ENCODE measurements at regions of chr1 and their contacts with region 1.

Region 1: DNA sequence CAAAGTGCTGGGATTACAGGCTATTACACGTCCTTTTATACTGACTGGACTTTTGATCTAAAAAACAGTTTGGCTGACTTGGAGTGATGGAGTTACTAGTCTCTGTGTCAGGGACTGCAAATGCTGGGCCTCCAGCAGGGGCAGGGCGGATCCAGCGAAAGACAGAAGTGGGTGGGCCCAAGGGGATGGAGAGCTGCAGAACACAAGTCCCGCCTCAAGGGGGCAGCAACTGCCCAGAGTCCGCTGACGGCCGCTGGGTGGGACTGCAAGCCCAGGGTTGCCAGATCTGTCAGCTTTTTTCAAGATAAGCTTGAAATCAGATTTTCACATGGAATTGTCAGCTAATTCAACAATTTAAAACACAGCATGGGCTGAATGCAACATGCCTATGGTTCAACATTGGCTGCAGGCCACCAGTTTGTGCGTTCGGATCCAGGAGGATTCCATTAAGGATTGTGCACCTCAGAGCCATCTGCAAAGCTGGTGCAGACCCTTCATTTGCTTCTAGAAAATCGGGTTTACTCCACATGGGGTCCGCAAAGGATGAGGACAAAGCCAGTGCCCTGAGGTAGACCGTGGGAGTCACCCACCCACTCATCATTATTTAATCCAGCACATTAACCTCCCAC is 10.7 kb downstream of the STMN1 start:
- DNase-seq: peak; percentile 86 to 96 (median 93)
- ATAC-seq: peak; percentile 100
- H3K4me3 ChIP-seq: no peak overlapping the region
- H3K4me3 Mint-ChIP-seq: peak overlapping the region in 1 of 10 donors; percentile 6
- H3K27ac ChIP-seq: no peak overlapping the region
- H3K27ac Mint-ChIP-seq: peak overlapping the region in 8 of 9 donors; percentile 8 to 76 (median 40)
- H3K4me1 ChIP-seq: peaks cover 0 to 9% of the 10 kb centered on the region in 2 donors
- H3K4me1 Mint-ChIP-seq: peaks cover 7 to 31% (median 11%) of the 10 kb centered on the region in 7 donors
- H3K27me3 ChIP-seq: no peaks in the 10 kb centered on the region
- H3K27me3 Mint-ChIP-seq: no peaks in the 10 kb centered on the region

Region 2: GRCh38 chr1:25837262-25837875 is 58.1 kb before region 1 on chr1:
- CTCF ChIA-PET with region 1: interaction called, 4 read pairs
- POLR2A ChIA-PET with region 1: no interaction called
- intact Hi-C with region 1: loop called in 1 of 2 experiments (anchors 2 kb)
- DNase-seq: no peak
- ATAC-seq: no peak
- H3K4me3 ChIP-seq: no peak overlapping the region
- H3K4me3 Mint-ChIP-seq: no peak overlapping the region
- H3K27ac ChIP-seq: no peak overlapping the region
- H3K27ac Mint-ChIP-seq: no peak overlapping the region
- H3K4me1 ChIP-seq: peaks cover 0 to 3% of the 10 kb centered on the region in 2 donors
- H3K4me1 Mint-ChIP-seq: peaks cover 0 to 13% (median 4%) of the 10 kb centered on the region in 7 donors
- H3K27me3 ChIP-seq: no peaks in the 10 kb centered on the region
- H3K27me3 Mint-ChIP-seq: no peaks in the 10 kb centered on the region

Region 3: GRCh38 chr1:25922056-25922969 is 26.8 kb after region 1 on chr1:
- CTCF ChIA-PET with region 1: interaction called, 23 read pairs
- POLR2A ChIA-PET with region 1: interaction called, 7 read pairs
- intact Hi-C with region 1: loop called (anchors 1 to 2 kb)
- DNase-seq: peak; percentile 26 to 64 (median 57)
- ATAC-seq: peak; percentile 84
- H3K4me3 ChIP-seq: peak overlapping the region; percentile 79
- H3K4me3 Mint-ChIP-seq: peak overlapping the region; percentile 78 to 91 (median 88)
- H3K27ac ChIP-seq: peak overlapping the region; percentile 60
- H3K27ac Mint-ChIP-seq: peak overlapping the region; percentile 31 to 90 (median 82)
- H3K4me1 ChIP-seq: peaks cover 19 to 20% of the 10 kb centered on the region in 2 donors
- H3K4me1 Mint-ChIP-seq: peaks cover 23 to 56% (median 43%) of the 10 kb centered on the region in 7 donors
- H3K27me3 ChIP-seq: no peaks in the 10 kb centered on the region
- H3K27me3 Mint-ChIP-seq: peaks cover 0 to 57% (median 0%) of the 10 kb centered on the region in 5 donors

Region 4: GRCh38 chr1:25978403-25978802 is 82.9 kb after region 1 on chr1:
- CTCF ChIA-PET with region 1: interaction called, 16 read pairs
- POLR2A ChIA-PET with region 1: no interaction called
- intact Hi-C with region 1: no loop called
- DNase-seq: no peak
- ATAC-seq: no peak
- H3K4me3 ChIP-seq: no peak overlapping the region
- H3K4me3 Mint-ChIP-seq: no peak overlapping the region
- H3K27ac ChIP-seq: no peak overlapping the region
- H3K27ac Mint-ChIP-seq: peak overlapping the region in 5 of 9 donors; percentile 5 to 79 (median 59)
- H3K4me1 ChIP-seq: peaks cover 0 to 3% of the 10 kb centered on the region in 2 donors
- H3K4me1 Mint-ChIP-seq: peaks cover 3 to 28% (median 12%) of the 10 kb centered on the region in 7 donors
- H3K27me3 ChIP-seq: no peaks in the 10 kb centered on the region
- H3K27me3 Mint-ChIP-seq: no peaks in the 10 kb centered on the region

Region 5: GRCh38 chr1:25997828-25998761 is 102.6 kb after region 1 on chr1 and contains the start of gene PAFAH2:
- CTCF ChIA-PET with region 1: interaction called, 361 read pairs
- POLR2A ChIA-PET with region 1: interaction called, 226 read pairs
- intact Hi-C with region 1: loop called (anchors 1 kb)
- DNase-seq: peak; percentile 83 to 99 (median 98)
- ATAC-seq: peak; percentile 98
- H3K4me3 ChIP-seq: peak within 1 kb of the TSS; percentile 76
- H3K4me3 Mint-ChIP-seq: peak within 1 kb of the TSS; percentile 91 to 99 (median 96)
- H3K27ac ChIP-seq: peak within 1 kb of the TSS; percentile 89
- H3K27ac Mint-ChIP-seq: peak within 1 kb of the TSS; percentile 96 to 99 (median 99)
- H3K4me1 ChIP-seq: peaks cover 8 to 18% of the 10 kb centered on the region in 2 donors
- H3K4me1 Mint-ChIP-seq: peaks cover 19 to 50% (median 40%) of the 10 kb centered on the region in 7 donors
- H3K27me3 ChIP-seq: no peaks in the 10 kb centered on the region
- H3K27me3 Mint-ChIP-seq: no peaks in the 10 kb centered on the region
- total RNA-seq, gene PAFAH2: 11.4 to 36.0 (median 12.7) TPM

Region 6: DNA sequence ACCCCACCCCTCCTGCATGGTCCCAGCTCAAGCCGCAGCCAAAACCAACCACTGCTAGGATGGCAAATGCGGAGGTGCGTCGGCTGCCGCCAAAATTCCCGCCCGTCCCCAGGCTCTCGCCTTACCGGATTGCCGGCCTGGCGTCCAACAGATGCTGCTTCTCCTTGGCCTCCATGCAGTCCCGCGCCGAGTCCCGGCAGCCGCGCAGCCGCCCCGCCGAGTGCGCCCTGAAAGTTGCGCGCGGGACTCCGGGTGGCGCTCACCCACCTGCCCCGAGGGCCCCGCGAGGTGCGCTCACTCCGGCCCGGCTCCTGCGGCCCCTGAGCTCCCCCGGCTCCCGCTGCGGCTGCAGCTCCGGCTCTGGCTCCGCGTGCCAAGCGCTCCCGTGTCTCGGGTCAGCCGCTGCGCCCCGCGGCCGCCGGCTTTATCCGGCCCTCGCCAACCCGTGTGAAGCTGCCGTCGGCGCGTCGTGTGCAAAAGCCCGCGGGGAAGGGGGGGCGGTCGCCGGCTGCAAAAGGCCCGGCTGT is 150.3 kb after region 1 on chr1 and contains the start of gene SLC30A2:
- CTCF ChIA-PET with region 1: no interaction called
- POLR2A ChIA-PET with region 1: no interaction called
- intact Hi-C with region 1: no loop called
- DNase-seq: no peak
- ATAC-seq: no peak
- H3K4me3 ChIP-seq: no peak within 1 kb of the TSS
- H3K4me3 Mint-ChIP-seq: peak within 1 kb of the TSS in 5 of 10 donors; percentile 3 to 69 (median 49)
- H3K27ac ChIP-seq: no peak within 1 kb of the TSS
- H3K27ac Mint-ChIP-seq: no peak within 1 kb of the TSS
- H3K4me1 ChIP-seq: no peaks in the 10 kb centered on the region
- H3K4me1 Mint-ChIP-seq: peaks cover 0 to 7% (median 3%) of the 10 kb centered on the region in 7 donors
- H3K27me3 ChIP-seq: peaks cover 0 to 3% of the 10 kb centered on the region in 2 donors
- H3K27me3 Mint-ChIP-seq: peaks cover 45 to 79% (median 59%) of the 10 kb centered on the region in 5 donors
- total RNA-seq, gene SLC30A2: not detected

Region 7: DNA sequence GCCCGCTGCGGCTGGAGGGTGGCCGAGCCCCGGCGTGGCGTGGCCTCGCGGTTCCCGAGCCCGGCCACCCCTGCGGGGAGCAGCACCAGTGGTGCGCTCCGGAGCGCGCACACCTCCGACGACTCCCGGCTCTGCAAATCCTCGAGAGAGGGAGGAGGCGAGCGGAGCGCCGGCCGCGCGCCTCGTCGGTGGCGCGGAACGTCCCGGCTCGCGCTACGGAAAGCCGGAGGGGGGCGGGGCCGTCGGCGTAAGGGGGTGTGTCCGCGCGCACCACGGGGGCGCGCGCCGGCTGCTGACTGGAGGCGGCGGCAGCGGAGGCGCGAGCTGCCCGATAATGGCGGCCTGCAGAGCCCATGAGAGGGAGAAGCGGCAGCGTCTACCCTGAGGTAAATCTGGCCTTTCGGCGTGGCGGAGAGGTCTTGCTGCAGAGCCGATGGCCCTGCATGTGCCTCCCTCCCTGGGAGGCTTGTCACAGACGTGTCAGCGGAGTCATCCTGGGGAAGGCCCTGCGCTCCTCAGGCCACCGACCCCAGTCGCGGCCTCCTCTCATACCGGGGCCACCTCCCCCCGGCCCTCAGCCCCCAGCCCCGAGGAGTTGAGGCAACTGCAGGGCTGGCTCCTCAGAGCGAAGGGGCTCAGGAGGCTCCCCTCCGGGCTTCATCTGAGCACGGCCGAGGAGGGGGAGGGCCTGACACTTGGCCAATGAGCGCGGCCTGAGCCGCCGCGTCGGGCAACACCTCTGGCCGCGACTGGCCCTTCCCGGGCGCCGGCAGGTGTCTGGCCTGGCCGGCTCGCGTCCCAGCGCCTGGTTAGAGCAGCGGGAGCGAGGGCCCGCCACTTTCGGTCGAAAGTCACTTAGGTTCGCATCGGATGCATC is 216.3 kb after region 1 on chr1 and contains the start of gene PDIK1L:
- CTCF ChIA-PET with region 1: no interaction called
- POLR2A ChIA-PET with region 1: no interaction called
- intact Hi-C with region 1: loop called in 1 of 2 experiments (anchors 5 kb)
- DNase-seq: peak; percentile 91 to 95 (median 94)
- ATAC-seq: peak; percentile 93
- H3K4me3 ChIP-seq: peak within 1 kb of the TSS; percentile 93
- H3K4me3 Mint-ChIP-seq: peak within 1 kb of the TSS; percentile 86 to 99 (median 93)
- H3K27ac ChIP-seq: peak within 1 kb of the TSS; percentile 84
- H3K27ac Mint-ChIP-seq: peak within 1 kb of the TSS; percentile 84 to 98 (median 92)
- H3K4me1 ChIP-seq: peaks cover 12 to 19% of the 10 kb centered on the region in 2 donors
- H3K4me1 Mint-ChIP-seq: peaks cover 6 to 44% (median 34%) of the 10 kb centered on the region in 7 donors
- H3K27me3 ChIP-seq: no peaks in the 10 kb centered on the region
- H3K27me3 Mint-ChIP-seq: no peaks in the 10 kb centered on the region
- total RNA-seq, gene PDIK1L: 9.1 to 29.6 (median 20.3) TPM